CD8-positive, alpha-beta memory T cell (primary cell): ENCODE measurements at regions of chr1 and their contacts with region 1.

Region 1: GRCh38 chr1:161201828-161202725 is at the start of gene NDUFS2:
- DNase-seq: peak; percentile 92 to 98 (median 93)
- H3K4me3 ChIP-seq: peak within 1 kb of the TSS; percentile 99
- H3K4me3 Mint-ChIP-seq: peak within 1 kb of the TSS; percentile 93 to 97 (median 95)
- H3K27ac ChIP-seq: peak within 1 kb of the TSS; percentile 89
- H3K27ac Mint-ChIP-seq: peak within 1 kb of the TSS; percentile 96 to 99 (median 98)
- H3K4me1 ChIP-seq: peaks cover 59% of the 10 kb centered on the region
- H3K4me1 Mint-ChIP-seq: peaks cover 59 to 73% (median 71%) of the 10 kb centered on the region in 3 donors
- H3K27me3 ChIP-seq: no peaks in the 10 kb centered on the region
- H3K27me3 Mint-ChIP-seq: no peaks in the 10 kb centered on the region
- total RNA-seq, gene NDUFS2: 93.5 to 97.1 TPM

Region 2: DNA sequence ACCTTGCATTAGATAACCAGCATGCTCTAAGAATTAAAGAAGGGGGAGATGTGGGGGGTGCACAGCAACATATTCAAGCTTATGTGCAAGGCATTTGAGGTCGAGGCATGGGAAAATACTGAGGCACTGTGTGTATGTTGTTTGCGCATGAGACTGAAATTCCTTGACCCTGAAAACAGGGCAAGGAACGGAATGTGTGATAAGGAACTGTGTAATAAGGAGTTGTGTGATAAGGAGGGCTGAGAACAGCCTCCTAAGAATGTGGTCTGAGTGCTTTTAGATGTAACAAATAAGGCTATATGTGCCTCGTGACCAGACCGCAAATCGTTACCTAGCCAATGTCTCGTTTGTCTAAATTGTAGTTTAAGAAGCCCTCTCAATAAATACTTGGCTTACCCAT is 290.6 kb before region 1 on chr1:
- CTCF ChIA-PET with region 1: no interaction called
- POLR2A ChIA-PET with region 1: no interaction called
- DNase-seq: no peak
- H3K4me3 ChIP-seq: no peak overlapping the region
- H3K4me3 Mint-ChIP-seq: no peak overlapping the region
- H3K27ac ChIP-seq: no peak overlapping the region
- H3K27ac Mint-ChIP-seq: no peak overlapping the region
- H3K4me1 ChIP-seq: no peaks in the 10 kb centered on the region
- H3K4me1 Mint-ChIP-seq: no peaks in the 10 kb centered on the region
- H3K27me3 ChIP-seq: no peaks in the 10 kb centered on the region
- H3K27me3 Mint-ChIP-seq: peaks cover 0 to under 1% of the 10 kb centered on the region in 2 donors

Region 3: DNA sequence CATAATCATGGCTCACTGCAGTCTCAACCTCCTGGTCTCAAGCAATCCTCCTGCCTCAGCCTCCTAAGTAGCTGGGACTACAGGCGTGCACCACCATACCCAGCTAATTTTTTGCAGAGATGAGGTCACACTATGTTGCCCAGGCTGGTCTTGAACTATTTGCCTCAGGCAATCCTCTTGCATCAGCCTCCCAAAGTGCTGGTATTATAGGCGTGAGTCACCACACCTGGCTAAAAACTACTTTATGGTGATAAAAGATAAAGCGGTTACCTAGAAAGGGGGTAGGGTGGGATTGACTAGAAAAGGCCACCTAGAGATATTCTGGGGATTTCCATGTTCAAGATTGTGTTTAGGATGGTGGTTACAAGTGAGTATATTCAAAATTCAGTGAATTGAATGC is 168.3 kb before region 1 on chr1:
- CTCF ChIA-PET with region 1: no interaction called
- POLR2A ChIA-PET with region 1: no interaction called
- DNase-seq: no peak
- H3K4me3 ChIP-seq: no peak overlapping the region
- H3K4me3 Mint-ChIP-seq: no peak overlapping the region
- H3K27ac ChIP-seq: no peak overlapping the region
- H3K27ac Mint-ChIP-seq: no peak overlapping the region
- H3K4me1 ChIP-seq: peaks cover 14% of the 10 kb centered on the region
- H3K4me1 Mint-ChIP-seq: peaks cover 16 to 35% (median 24%) of the 10 kb centered on the region in 3 donors
- H3K27me3 ChIP-seq: no peaks in the 10 kb centered on the region
- H3K27me3 Mint-ChIP-seq: no peaks in the 10 kb centered on the region

Region 4: DNA sequence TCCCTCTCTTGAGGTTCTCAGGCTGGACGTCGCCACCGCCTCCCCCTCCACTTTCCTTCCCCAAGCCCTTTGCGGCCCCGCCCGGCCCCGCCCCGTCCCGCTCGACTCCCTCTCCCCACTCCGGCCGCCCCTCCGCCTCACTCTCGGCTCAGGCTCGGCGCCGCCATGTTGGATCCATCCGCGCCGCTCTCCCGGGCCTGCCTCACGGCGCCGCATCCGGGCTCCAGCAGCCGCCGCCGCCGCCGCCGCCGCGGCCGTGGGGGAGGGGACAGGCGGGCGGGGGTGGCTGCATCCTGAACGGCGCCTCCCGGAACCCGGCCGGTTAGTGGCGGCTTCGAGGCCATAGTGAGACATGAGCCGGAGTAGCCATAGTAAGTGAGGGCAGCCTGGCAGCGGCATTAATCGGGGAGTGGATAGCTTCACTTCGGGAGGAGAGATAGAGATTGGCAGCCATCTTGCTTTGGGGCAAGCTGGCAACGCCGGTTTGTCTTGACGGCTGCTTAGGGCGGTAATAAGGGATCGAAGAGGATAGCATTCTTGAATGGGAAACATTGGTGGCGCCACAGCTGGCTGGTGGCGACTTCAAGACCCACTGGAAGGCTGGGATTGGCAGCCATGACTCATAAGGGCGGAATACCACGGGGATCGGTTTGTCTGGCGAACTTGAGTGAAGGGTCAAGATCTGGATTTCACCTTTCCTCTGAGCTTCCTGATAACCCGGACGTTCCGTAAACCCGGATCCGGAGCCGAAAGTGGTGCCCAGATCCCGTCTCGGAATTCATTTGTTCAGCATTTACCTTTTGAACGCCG is 69.5 kb before region 1 on chr1 and contains the start of gene DEDD:
- CTCF ChIA-PET with region 1: no interaction called
- POLR2A ChIA-PET with region 1: interaction called, 10 read pairs
- DNase-seq: peak; percentile 84 to 95 (median 91)
- H3K4me3 ChIP-seq: peak within 1 kb of the TSS; percentile 98
- H3K4me3 Mint-ChIP-seq: no peak within 1 kb of the TSS
- H3K27ac ChIP-seq: peak within 1 kb of the TSS; percentile 84
- H3K27ac Mint-ChIP-seq: peak within 1 kb of the TSS in 4 of 8 donors; percentile 91 to 98 (median 96)
- H3K4me1 ChIP-seq: peaks cover 35% of the 10 kb centered on the region
- H3K4me1 Mint-ChIP-seq: peaks cover 33 to 46% (median 44%) of the 10 kb centered on the region in 3 donors
- H3K27me3 ChIP-seq: no peaks in the 10 kb centered on the region
- H3K27me3 Mint-ChIP-seq: no peaks in the 10 kb centered on the region
- total RNA-seq, gene DEDD: 41.0 to 41.9 TPM

Region 5: GRCh38 chr1:161159087-161159912 is 42.8 kb before region 1 on chr1 and contains the start of gene USP21:
- CTCF ChIA-PET with region 1: no interaction called
- POLR2A ChIA-PET with region 1: no interaction called
- DNase-seq: peak; percentile 87 to 94 (median 89)
- H3K4me3 ChIP-seq: peak within 1 kb of the TSS; percentile 79
- H3K4me3 Mint-ChIP-seq: peak within 1 kb of the TSS; percentile 90 to 97 (median 95)
- H3K27ac ChIP-seq: peak within 1 kb of the TSS; percentile 75
- H3K27ac Mint-ChIP-seq: peak within 1 kb of the TSS; percentile 89 to 99 (median 96)
- H3K4me1 ChIP-seq: peaks cover 37% of the 10 kb centered on the region
- H3K4me1 Mint-ChIP-seq: peaks cover 43 to 79% (median 74%) of the 10 kb centered on the region in 3 donors
- H3K27me3 ChIP-seq: no peaks in the 10 kb centered on the region
- H3K27me3 Mint-ChIP-seq: no peaks in the 10 kb centered on the region
- total RNA-seq, gene USP21: 26.1 to 27.4 TPM

Region 6: DNA sequence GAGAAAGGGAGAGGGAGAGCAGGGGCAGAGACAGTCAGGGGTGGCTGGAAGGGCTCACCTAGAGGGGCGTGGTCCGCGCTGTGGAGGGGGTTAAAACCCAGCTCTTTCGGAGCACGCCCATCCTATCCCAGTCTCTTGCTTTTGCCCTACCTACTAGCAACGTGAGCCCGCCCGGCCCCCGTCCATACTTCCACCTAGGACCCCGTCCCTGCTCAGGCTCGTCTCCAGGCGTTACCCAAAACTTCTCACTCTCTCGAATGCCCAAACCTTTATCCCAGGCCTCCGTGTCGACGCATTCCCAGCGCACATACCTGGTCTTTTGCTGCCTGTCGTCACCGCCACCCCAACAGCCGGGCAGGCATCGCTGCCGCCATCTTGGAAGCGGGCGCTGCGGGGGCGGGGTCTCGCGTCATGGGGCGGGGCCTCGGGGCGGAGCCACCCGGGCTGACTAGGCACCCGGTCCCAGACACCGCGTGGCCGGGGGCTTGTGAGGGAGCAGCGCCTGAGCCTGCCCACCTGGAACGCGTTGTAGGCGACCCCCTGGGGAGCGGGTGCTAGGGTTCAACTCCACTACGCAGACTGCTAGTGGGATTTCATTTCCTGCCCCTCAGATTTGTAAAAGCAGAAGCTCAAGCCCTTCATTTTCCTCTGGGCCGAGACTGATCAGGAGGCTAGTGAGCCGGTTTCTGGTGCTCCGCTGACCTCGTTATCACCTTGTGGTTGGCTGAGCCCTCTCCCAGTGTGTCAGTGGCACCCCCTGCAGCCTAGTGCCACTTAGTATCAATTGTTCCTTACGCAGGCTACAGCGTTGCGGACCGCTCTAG is 24.8 kb before region 1 on chr1 and contains the start of gene B4GALT3:
- CTCF ChIA-PET with region 1: interaction called, 20 read pairs
- POLR2A ChIA-PET with region 1: interaction called, 15 read pairs
- DNase-seq: peak; percentile 88 to 94 (median 92)
- H3K4me3 ChIP-seq: peak within 1 kb of the TSS; percentile 98
- H3K4me3 Mint-ChIP-seq: peak within 1 kb of the TSS; percentile 95 to 100 (median 100)
- H3K27ac ChIP-seq: peak within 1 kb of the TSS; percentile 89
- H3K27ac Mint-ChIP-seq: peak within 1 kb of the TSS; percentile 93 to 100 (median 99)
- H3K4me1 ChIP-seq: peaks cover 47% of the 10 kb centered on the region
- H3K4me1 Mint-ChIP-seq: peaks cover 68 to 87% (median 85%) of the 10 kb centered on the region in 3 donors
- H3K27me3 ChIP-seq: no peaks in the 10 kb centered on the region
- H3K27me3 Mint-ChIP-seq: peaks cover 0 to 5% of the 10 kb centered on the region in 2 donors
- total RNA-seq, gene B4GALT3: 59.4 to 60.9 TPM

Region 7: DNA sequence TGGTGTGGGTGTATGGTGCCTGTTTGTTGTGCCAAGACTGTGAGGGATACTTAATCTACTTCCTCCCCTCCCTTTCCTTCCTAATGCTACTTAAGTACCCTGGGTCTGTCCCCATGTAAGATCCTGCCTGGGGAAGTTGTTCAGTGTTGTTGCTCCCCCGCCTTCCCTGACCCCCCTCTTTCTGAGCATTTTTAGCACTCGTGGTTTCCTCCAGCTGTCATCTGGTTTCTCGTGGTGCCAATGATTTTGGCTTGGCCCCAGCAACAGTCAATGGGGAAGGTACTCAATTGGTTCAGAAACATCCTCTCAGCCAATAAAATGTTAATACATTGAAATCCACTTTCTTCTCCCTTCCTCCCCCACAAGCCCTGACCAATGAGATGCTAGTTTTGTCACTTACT is 16.8 kb before region 1 on chr1:
- CTCF ChIA-PET with region 1: interaction called, 20 read pairs
- POLR2A ChIA-PET with region 1: interaction called, 15 read pairs
- DNase-seq: peak; percentile 64 to 90 (median 86)
- H3K4me3 ChIP-seq: peak overlapping the region; percentile 19
- H3K4me3 Mint-ChIP-seq: peak overlapping the region; percentile 82 to 94 (median 88)
- H3K27ac ChIP-seq: peak overlapping the region; percentile 28
- H3K27ac Mint-ChIP-seq: peak overlapping the region; percentile 58 to 98 (median 90)
- H3K4me1 ChIP-seq: peaks cover 85% of the 10 kb centered on the region
- H3K4me1 Mint-ChIP-seq: peaks cover 75 to 87% (median 86%) of the 10 kb centered on the region in 3 donors
- H3K27me3 ChIP-seq: no peaks in the 10 kb centered on the region
- H3K27me3 Mint-ChIP-seq: peaks cover 0 to 1% of the 10 kb centered on the region in 2 donors

Region 8: DNA sequence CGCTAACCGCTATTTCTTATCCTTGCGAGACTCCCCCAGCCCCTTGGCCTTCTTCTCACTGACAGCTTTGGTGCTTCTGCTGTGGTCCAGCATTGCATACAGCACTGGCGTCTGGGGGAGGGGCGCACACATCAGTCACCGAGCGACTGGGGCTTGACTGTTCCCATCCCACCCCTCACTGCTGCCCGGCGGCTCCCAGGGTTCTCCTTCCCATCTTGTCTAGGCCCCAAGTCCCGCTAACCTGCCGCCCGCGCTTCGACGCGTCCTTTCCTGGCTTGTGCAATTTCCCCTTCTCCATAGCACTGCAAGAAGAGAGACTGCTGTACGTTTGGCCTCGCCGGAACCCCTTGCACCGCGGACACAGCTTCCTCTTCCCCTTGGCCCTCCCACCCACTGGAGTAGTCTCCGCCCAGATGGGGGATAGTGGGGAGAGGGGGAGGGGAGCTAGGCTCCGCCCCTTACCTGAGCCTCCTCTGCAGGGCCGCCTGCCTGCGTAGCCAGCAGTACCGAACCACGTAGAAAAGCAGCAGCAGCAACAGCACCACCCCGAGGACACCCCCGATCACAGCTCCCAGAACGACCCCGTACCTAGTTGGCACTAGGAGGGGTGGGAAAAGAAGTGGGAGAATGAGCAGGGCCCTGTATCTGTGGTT is 103.9 kb after region 1 on chr1:
- CTCF ChIA-PET with region 1: interaction called, 3 read pairs
- POLR2A ChIA-PET with region 1: interaction called, 12 read pairs
- DNase-seq: peak; percentile 73 to 95 (median 92)
- H3K4me3 ChIP-seq: peak overlapping the region; percentile 89
- H3K4me3 Mint-ChIP-seq: peak overlapping the region; percentile 91 to 99 (median 93)
- H3K27ac ChIP-seq: peak overlapping the region; percentile 78
- H3K27ac Mint-ChIP-seq: peak overlapping the region; percentile 79 to 100 (median 93)
- H3K4me1 ChIP-seq: peaks cover 30% of the 10 kb centered on the region
- H3K4me1 Mint-ChIP-seq: peaks cover 30 to 49% (median 42%) of the 10 kb centered on the region in 3 donors
- H3K27me3 ChIP-seq: no peaks in the 10 kb centered on the region
- H3K27me3 Mint-ChIP-seq: no peaks in the 10 kb centered on the region

Region 9: DNA sequence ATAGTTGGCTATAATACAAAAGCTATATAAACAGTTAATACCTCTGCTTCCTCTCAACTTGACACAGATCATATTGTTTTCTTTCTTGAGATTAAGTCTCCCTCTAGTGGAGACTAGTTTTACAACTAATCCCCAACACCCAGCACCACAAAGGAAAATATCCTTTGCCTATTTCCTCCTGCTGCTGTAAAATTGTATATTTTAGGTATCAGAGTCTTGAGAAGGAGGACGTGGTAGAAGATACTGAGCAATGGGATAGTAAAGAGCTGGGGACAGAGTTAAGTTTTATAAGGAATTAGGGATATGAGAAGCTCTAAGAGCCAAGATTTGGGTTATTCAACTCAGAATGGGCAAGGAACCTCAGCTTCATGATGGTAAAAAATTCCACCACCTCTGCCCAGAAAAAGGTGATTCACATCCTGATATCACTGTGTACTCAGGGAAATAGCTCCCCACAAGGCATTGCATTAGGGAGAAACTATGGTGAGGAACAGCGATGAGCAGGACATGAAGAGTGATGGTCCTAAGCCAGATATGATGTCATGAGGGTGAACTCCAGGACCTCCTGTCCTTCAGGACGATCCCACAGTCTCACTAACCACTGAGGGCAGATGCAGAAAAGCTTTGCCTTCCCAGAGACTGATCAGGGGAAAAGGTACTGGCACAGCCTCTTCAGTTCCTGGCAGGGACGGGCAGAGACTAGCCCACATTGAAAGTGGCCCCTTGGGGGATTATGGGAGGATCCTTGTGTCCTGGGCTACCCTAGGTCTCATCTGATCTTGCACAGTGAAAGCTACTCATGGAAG is 180.3 kb after region 1 on chr1:
- CTCF ChIA-PET with region 1: interaction called, 10 read pairs
- POLR2A ChIA-PET with region 1: no interaction called
- DNase-seq: peak in 2 of 5 donors; percentile 37 to 48
- H3K4me3 ChIP-seq: no peak overlapping the region
- H3K4me3 Mint-ChIP-seq: no peak overlapping the region
- H3K27ac ChIP-seq: no peak overlapping the region
- H3K27ac Mint-ChIP-seq: peak overlapping the region in 2 of 8 donors; percentile 0 to 62
- H3K4me1 ChIP-seq: no peaks in the 10 kb centered on the region
- H3K4me1 Mint-ChIP-seq: peaks cover 4 to 12% (median 8%) of the 10 kb centered on the region in 3 donors
- H3K27me3 ChIP-seq: no peaks in the 10 kb centered on the region
- H3K27me3 Mint-ChIP-seq: peaks cover 0 to 2% of the 10 kb centered on the region in 2 donors